Tibial artery (tissue), 4 donors: ENCODE measurements at regions of chr4 and their contacts with region 1.

Region 1: GRCh38 chr4:47463235-47463956 is at the start of gene COMMD8:
- DNase-seq: peak; percentile 97
- H3K4me3 ChIP-seq: peak within 1 kb of the TSS; percentile 66 to 78
- H3K27ac ChIP-seq: peak within 1 kb of the TSS; percentile 72 to 80
- H3K4me1 ChIP-seq: peaks cover 0 to 9% (median 3%) of the 10 kb centered on the region in 4 donors
- H3K27me3 ChIP-seq: no peaks in the 10 kb centered on the region
- CTCF ChIP-seq: peak; percentile 43 to 51

Region 2: DNA sequence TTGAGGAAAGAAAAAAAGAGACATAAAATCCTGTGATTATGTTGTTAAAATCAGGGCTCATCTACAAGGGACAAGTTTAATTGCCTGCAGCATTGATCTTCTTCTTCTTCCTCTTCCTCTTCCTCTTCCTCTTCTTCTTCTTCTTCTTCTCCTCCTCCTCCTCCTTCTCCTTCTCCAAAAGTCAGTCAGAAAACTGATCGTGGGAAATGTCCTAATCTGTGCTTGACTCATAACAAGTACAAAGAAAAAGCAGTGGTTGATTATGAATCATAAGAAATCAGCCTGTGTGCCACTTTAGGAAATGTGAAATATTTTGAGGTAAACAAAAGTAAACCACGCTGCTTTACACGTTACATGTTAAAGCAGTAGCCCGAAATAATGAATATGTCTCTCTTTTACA is 18.9 kb after region 1 on chr4:
- intact Hi-C with region 1: loop called (anchors 1 kb)
- DNase-seq: no peak
- H3K4me3 ChIP-seq: no peak overlapping the region
- H3K27ac ChIP-seq: no peak overlapping the region
- H3K4me1 ChIP-seq: peaks cover 0 to 15% (median 2%) of the 10 kb centered on the region in 4 donors
- H3K27me3 ChIP-seq: no peaks in the 10 kb centered on the region
- CTCF ChIP-seq: no peak

Region 3: GRCh38 chr4:47560682-47561081 is 97.3 kb after region 1 on chr4:
- intact Hi-C with region 1: loop called (anchors 1 kb)
- DNase-seq: no peak
- H3K4me3 ChIP-seq: no peak overlapping the region
- H3K27ac ChIP-seq: no peak overlapping the region
- H3K4me1 ChIP-seq: peaks cover 0 to 6% (median 3%) of the 10 kb centered on the region in 4 donors
- H3K27me3 ChIP-seq: no peaks in the 10 kb centered on the region
- CTCF ChIP-seq: no peak